ENCODE measurements at regions of chr5 and their contacts with region 1.

Region 1: GRCh38 chr5:159286420-159287035 is 23.4 kb downstream of the UBLCP1 start:
- DNase-seq: peak; percentile 52
- H3K4me3 ChIP-seq: no peak overlapping the region
- H3K27ac ChIP-seq: no peak overlapping the region
- H3K4me1 ChIP-seq: no peaks in the 10 kb centered on the region
- CTCF ChIP-seq: peak; percentile 79

Region 2: GRCh38 chr5:159965031-159965837 is 678.7 kb after region 1 on chr5:
- CTCF ChIA-PET with region 1: no interaction called
- POLR2A ChIA-PET with region 1: no interaction called
- intact Hi-C with region 1: loop called (anchors 5 kb)
- DNase-seq: peak; percentile 42
- H3K4me3 ChIP-seq: no peak overlapping the region
- H3K27ac ChIP-seq: no peak overlapping the region
- H3K4me1 ChIP-seq: no peaks in the 10 kb centered on the region
- CTCF ChIP-seq: peak; percentile 76

Measured in OCI-LY7 (cell line).